ENCODE measurements at regions of chr4 and their contacts with region 1.

Region 1: DNA sequence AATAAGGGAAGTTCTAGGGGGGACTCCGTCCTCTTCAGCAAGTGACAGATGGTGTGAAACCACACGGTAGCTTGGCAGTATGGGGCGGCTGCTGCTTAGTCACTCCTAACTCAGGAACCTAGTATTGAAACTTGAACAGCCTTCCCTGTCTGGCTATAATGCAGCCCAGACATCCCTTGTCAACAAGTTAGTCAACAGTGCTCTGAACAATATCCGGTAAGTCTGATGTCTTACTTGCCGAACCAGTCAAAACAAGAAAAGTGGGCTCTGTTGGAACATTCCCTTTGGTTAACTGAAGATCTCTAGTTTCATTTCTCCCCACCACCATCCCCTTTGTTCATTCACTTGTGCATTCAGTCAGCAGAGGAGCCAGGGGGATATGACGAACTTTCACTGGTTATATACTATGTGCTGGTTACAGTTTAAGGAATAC is 18.7 kb upstream of the CXCL13 start:
- DNase-seq: peak; percentile 72
- H3K4me3 Mint-ChIP-seq: peak overlapping the region; percentile 49
- H3K27ac Mint-ChIP-seq: peak overlapping the region; percentile 77
- H3K4me1 Mint-ChIP-seq: peaks cover 61% of the 10 kb centered on the region
- H3K27me3 Mint-ChIP-seq: no peaks in the 10 kb centered on the region

Region 2: DNA sequence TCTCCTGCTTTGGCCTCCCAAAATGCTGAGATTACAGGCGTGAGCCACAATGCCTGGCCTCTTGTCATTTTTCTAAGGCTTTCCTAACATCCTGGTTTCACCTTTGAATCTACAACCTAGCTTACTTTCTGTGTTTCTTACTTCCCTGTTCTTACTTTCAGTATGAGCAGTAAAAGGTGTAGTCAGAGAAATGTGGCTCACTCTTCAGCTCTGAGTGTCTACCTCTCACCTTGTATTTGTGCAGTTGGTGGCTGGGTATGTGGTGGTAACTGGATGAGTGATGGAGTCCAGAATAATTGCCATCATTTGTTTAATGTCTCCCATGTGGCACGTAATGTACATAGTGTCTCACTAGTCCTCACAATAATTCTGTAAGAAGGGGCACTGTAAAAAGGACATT is 1532.0 kb before region 1 on chr4:
- intact Hi-C with region 1: loop called (anchors 2 kb)
- DNase-seq: peak; percentile 9
- H3K4me3 Mint-ChIP-seq: peak overlapping the region; percentile 23
- H3K27ac Mint-ChIP-seq: peak overlapping the region; percentile 52
- H3K4me1 Mint-ChIP-seq: peaks cover 57% of the 10 kb centered on the region
- H3K27me3 Mint-ChIP-seq: no peaks in the 10 kb centered on the region

Region 3: DNA sequence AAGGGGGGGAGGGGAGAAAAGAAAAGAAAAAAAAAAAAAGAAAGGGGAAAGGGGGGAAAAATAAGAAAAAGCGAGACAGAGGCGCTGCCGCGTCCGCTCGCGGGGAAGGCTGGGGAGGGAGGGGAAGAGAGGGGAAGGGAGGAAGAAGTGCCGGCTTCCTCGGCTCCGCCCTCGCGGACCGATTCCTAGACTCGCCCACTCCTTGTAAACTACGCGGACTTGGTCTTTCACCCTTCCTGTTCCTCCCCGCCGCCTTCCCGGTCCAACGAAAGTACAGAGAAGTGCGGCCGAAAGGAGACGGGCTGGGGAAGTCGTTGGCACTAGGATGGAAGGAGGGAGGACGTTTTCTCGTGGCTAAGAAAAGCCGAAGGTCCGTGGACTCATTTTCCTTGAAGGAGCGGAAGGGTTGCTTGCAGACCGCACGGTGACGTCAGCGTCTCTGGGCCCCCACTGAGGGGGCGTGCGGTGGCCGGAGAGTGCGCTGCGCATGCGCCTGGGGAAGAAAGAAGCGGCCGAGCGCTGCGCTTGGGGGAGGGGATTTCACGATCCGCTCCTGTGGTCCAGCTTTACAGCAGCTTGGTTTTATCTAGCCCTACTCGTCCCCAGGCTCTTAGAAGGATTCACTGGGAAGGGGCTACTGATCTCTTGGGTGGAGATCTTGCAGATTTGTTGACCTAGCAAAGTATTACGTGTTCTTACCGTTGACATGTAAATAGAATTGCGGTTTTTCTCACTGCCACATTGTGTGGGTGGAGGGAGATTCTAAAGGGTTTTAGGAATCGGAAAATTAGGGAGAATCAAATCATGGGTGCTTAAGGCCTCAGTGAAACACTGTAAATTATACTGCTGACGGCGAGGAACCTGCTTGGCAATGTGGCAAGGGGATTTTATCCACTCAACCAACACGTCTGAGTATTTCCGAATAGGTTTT is 510.8 kb before region 1 on chr4 and contains the start of gene CCNI:
- intact Hi-C with region 1: loop called (anchors 1 kb)
- DNase-seq: peak; percentile 91
- H3K4me3 Mint-ChIP-seq: peak within 1 kb of the TSS; percentile 96
- H3K27ac Mint-ChIP-seq: peak within 1 kb of the TSS; percentile 100
- H3K4me1 Mint-ChIP-seq: peaks cover 42% of the 10 kb centered on the region
- H3K27me3 Mint-ChIP-seq: peaks cover 4% of the 10 kb centered on the region
- total RNA-seq, gene CCNI: 236 and 253 TPM in 2 replicates

Region 4: DNA sequence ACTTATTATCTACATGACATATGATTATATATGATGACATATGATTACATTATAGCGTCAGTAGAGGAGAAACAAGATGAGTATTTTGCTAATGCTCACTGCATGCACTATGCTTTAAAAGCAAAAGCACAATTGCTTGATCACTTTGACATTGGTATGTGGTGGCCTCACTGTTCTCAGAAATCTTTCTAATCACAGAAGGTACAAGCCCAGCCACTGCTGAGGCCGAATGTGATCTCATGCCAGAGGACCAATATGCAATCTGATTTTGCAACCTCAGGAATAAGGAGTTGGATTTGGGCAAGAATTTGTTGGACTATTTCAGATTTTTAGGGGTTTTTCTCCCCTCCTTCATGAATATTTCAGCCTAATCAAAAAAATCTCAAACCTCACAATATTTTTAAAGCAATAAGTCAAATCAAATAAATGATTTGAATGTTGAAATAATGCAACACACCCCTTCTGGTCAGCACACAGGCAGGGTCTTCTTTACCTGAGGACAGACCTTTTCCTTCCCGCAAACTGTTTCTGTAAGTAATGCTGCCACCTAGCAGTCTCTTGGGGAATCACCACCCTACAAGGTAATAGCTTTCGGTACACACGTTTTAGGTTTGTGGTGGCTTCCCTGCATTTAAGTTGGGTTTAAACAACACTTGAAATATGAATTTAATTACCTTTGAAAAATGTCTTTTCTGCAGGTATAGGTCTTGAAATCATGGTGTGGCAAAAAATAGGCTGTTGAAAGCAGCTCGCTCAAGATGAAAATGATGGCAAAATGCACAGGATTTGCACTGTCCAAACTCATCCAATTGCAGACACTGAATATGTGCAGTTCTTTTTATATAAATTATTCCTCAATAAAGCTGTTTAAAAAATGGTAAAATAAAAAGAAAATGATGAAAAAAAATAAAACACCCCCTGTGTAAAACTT is 13.8 kb after region 1 on chr4:
- intact Hi-C with region 1: loop called (anchors 1 kb)
- DNase-seq: no peak
- H3K4me3 Mint-ChIP-seq: no peak overlapping the region
- H3K27ac Mint-ChIP-seq: no peak overlapping the region
- H3K4me1 Mint-ChIP-seq: peaks cover 33% of the 10 kb centered on the region
- H3K27me3 Mint-ChIP-seq: peaks cover 7% of the 10 kb centered on the region

Region 5: DNA sequence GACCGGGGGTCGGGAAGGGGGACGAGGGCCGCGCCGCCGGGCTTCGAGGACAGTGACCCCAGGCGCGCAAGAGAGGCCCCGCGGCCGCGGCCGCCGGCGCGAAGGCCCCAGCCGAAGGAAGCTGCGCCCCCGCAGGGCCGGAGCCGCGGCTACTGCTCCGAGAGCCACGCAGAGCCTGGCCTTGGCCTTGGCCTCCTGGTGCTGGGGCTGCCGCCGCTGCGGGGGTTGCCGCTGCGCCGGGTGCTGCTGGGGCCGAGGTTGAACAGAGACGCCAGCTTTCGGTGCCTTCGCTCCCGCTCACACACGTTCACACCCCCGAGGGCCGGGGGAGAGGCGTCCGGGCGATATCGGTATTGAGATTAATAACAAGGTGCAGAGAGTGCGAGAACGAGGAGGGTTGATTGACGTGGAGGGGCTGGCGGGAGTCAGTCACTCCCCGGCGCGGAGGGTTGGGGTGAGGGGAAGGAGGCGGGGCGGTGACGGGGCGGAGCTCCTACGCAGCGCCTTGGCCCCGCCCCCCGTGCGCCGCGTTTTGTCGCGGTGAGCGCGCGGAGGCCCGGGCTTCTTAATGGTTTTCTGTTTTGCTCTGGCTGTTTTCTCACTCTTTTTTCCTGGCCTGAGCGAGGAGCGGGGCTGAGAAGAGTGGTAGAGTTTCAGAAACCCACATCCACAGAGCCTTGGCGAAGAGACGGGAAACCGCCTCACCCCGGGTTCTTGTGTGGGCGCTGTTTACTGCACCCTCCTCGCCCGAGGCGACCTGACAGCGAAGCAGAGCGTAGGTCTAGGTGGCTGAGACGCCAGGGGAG is 233.1 kb after region 1 on chr4:
- intact Hi-C with region 1: loop called (anchors 1 kb)
- DNase-seq: peak; percentile 92
- H3K4me3 Mint-ChIP-seq: peak overlapping the region; percentile 91
- H3K27ac Mint-ChIP-seq: peak overlapping the region; percentile 99
- H3K4me1 Mint-ChIP-seq: peaks cover 47% of the 10 kb centered on the region
- H3K27me3 Mint-ChIP-seq: peaks cover 5% of the 10 kb centered on the region

Region 6: DNA sequence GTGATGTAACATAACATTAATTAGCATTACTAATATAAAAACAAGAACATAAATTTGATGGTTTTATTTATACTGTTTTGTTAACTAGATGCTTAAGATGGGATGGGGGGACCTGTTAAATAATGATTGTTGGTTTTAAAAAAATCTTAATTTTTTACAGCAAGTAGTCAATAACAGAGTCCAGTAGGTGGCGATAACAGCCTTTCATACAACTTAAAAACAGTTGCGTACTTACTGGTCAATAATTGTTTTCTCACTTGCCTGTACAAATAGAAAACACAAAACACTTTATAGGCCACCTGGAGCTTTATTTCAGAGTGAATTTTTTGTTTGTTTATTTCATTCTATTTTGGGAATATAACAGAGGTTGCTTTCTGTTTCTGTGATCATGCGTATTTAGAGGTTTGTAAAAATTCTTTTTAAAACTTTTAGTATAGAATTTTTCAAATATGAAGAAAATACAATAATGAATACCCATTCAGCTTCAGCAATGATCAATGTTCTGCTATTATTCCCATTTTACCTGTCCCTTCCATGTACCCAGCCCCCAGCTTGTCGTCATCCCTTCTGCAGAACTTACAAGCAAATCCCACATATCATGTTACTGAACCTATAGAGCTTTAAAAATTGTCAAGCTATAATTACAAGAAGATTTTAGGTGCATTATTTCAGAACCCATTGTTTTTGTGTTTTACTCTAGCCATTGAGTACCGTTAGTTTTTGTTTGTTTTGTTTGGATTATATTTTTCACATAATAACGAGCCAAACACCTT is 372.8 kb after region 1 on chr4:
- intact Hi-C with region 1: loop called (anchors 10 kb)
- DNase-seq: no peak
- H3K4me3 Mint-ChIP-seq: no peak overlapping the region
- H3K27ac Mint-ChIP-seq: no peak overlapping the region
- H3K4me1 Mint-ChIP-seq: no peaks in the 10 kb centered on the region
- H3K27me3 Mint-ChIP-seq: peaks cover under 1% of the 10 kb centered on the region

Region 7: DNA sequence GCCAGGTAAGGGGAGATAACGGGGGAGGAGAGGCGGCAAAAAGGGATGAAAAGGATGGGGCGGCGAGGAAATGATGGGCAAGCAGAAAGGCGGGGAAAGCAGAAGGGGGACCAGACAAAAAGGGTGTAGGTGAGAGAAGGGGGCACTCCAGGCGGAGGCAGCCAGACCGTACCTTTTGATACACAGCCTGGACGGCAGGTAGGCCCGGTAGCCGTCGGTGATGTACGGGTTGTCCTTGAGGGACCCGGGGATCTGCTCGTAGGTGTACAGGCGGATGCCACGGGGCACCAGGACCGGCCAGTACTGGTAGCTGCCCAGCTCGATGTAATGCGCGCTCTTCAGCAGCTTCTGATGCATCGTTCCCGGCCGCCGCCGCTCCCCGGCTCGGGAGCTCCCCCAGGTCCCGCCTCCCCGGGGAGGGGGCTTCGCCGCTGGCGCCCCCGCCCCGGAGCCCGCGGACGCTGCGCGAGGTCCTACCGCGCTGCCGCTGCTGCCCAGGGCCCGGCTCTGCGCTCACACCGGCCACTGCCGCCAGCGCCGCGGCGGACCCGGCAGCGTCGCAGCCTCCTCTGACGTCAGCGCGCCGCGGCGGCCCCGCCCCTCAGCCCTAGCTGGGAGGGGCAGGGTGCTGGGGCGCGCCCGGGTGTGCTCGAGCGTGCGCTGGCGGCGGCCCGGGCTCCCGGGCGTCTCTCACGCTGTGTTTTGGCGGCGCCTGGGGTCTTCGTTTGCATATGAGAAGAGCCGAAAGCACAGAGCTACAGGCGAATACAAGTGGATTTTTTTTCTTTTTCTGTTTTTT is 1352.1 kb after region 1 on chr4 and contains the start of gene PAQR3:
- intact Hi-C with region 1: loop called (anchors 10 kb)
- DNase-seq: peak; percentile 82
- H3K4me3 Mint-ChIP-seq: peak within 1 kb of the TSS; percentile 97
- H3K27ac Mint-ChIP-seq: peak within 1 kb of the TSS; percentile 88
- H3K4me1 Mint-ChIP-seq: peaks cover 47% of the 10 kb centered on the region
- H3K27me3 Mint-ChIP-seq: peaks cover 16% of the 10 kb centered on the region
- total RNA-seq, gene PAQR3: 19.6 and 19.8 TPM in 2 replicates